Aorta (tissue), 5 donors: ENCODE measurements at regions of chr2 and their contacts with region 1.

Region 1: DNA sequence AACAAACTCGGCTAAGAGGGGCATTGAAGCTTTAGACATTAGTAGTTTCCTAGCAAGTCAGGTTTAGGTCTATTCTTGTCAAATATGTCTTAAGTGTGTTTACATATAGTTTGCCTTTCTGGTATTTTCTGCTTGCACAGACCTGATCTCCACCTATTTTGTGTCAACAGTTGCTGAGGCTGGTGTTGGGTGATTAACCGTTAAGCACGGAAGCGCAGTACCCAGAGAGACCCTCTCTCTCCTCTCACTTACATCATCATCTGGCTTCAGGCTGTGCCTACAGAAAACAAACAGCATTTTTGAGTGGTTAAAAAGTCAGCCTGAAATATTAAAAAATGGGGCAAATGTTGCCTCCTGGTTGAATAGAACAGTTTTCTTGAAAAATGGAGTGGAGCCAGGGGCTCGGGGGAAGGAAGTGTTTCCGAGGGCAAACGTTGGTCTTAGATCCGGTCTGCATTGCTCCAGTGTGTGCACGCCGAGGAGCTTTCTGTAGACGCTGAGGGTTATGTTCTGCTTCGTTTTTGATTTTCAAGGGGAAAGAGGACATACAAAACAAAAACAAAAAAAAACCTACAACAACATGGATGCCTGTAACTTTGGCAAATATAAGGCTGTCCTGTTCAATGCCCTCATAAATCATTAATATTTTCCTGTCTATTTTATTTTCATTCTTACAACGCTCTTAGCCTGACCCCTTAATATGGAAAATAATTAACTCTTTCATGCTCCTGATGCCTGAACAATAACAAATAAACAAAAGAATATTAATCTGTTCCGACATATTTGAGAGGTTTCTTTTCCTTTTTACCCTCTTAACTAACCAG is 120.8 kb downstream of the MEIS1 start:
- DNase-seq: no peak
- ATAC-seq: peak; percentile 70
- H3K4me3 ChIP-seq: peak overlapping the region in 1 of 2 donors; percentile 72
- H3K27ac ChIP-seq: peak overlapping the region; percentile 76 to 86
- H3K4me1 ChIP-seq: peaks cover 0 to 11% of the 10 kb centered on the region in 2 donors
- H3K27me3 ChIP-seq: no peaks in the 10 kb centered on the region

Region 2: GRCh38 chr2:66439812-66440542 is 115.7 kb before region 1 on chr2:
- intact Hi-C with region 1: loop called in 1 of 2 experiments (anchors 5 kb)
- DNase-seq: peak in 1 of 2 donors; percentile 46
- ATAC-seq: no peak
- H3K4me3 ChIP-seq: peak overlapping the region; percentile 70 to 91
- H3K27ac ChIP-seq: peak overlapping the region; percentile 89 to 98
- H3K4me1 ChIP-seq: no peaks in the 10 kb centered on the region
- H3K27me3 ChIP-seq: no peaks in the 10 kb centered on the region

Region 3: GRCh38 chr2:66587216-66587615 is 31.5 kb after region 1 on chr2:
- intact Hi-C with region 1: no loop called
- DNase-seq: no peak
- ATAC-seq: no peak
- H3K4me3 ChIP-seq: no peak overlapping the region
- H3K27ac ChIP-seq: no peak overlapping the region
- H3K4me1 ChIP-seq: no peaks in the 10 kb centered on the region
- H3K27me3 ChIP-seq: no peaks in the 10 kb centered on the region